Astrocyte of the cerebellum (primary cell): ENCODE measurements at regions of chr5 and their contacts with region 1.

Region 1: GRCh38 chr5:5505815-5506214 is 83.3 kb downstream of the ICE1 start:
- DNase-seq: no peak
- H3K4me3 ChIP-seq: no peak overlapping the region
- CTCF ChIP-seq: no peak

Region 2: DNA sequence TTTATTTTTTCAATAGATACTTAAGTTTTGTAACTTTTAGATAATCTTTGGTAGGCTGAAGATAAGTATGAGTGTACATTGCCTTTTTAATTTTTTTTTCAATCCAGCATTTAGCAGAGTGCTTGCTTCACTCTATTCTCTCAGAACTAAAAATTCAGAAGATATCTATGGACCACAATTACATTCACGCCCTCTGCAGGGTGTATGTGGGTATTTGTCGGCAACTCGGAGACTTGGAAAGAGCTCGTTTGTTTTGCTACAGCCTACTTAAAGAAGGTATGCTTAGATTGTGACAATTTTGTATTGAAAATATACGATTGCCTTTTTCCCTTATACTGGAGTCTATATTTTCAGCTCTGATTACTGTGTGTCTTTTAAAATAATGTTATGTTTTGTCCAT is 39.6 kb before region 1 on chr5:
- in situ Hi-C with region 1: no loop called
- DNase-seq: no peak
- H3K4me3 ChIP-seq: no peak overlapping the region
- CTCF ChIP-seq: no peak

Region 3: GRCh38 chr5:5558638-5559037 is 52.8 kb after region 1 on chr5:
- in situ Hi-C with region 1: loop called (anchors 5 kb)
- DNase-seq: no peak
- H3K4me3 ChIP-seq: no peak overlapping the region
- CTCF ChIP-seq: no peak